ENCODE measurements at regions of chr11 and their contacts with region 1.

Region 1: GRCh38 chr11:63888170-63889086 is 28.5 kb downstream of the RCOR2 start:
- DNase-seq: peak; percentile 83
- ATAC-seq: peak; percentile 89
- H3K4me3 ChIP-seq: peak overlapping the region; percentile 36 to 88 (median 68)
- H3K4me3 Mint-ChIP-seq: peak overlapping the region; percentile 93
- H3K27ac ChIP-seq: peak overlapping the region; percentile 67 to 82
- H3K27ac Mint-ChIP-seq: peak overlapping the region; percentile 87
- H3K4me1 ChIP-seq: peaks cover 39 to 53% of the 10 kb centered on the region in 2 donors
- H3K4me1 Mint-ChIP-seq: peaks cover 72% of the 10 kb centered on the region
- H3K27me3 ChIP-seq: no peaks in the 10 kb centered on the region
- H3K27me3 Mint-ChIP-seq: no peaks in the 10 kb centered on the region
- CTCF ChIP-seq: no peak

Region 2: GRCh38 chr11:63877658-63878241 is 10.7 kb before region 1 on chr11:
- CTCF ChIA-PET with region 1: interaction called, 5 read pairs
- POLR2A ChIA-PET with region 1: interaction called, 10 read pairs
- intact Hi-C with region 1: no loop called
- DNase-seq: no peak
- ATAC-seq: no peak
- H3K4me3 ChIP-seq: no peak overlapping the region
- H3K4me3 Mint-ChIP-seq: no peak overlapping the region
- H3K27ac ChIP-seq: no peak overlapping the region
- H3K27ac Mint-ChIP-seq: no peak overlapping the region
- H3K4me1 ChIP-seq: peaks cover 3 to 11% of the 10 kb centered on the region in 2 donors
- H3K4me1 Mint-ChIP-seq: peaks cover 48% of the 10 kb centered on the region
- H3K27me3 ChIP-seq: no peaks in the 10 kb centered on the region
- H3K27me3 Mint-ChIP-seq: no peaks in the 10 kb centered on the region
- CTCF ChIP-seq: no peak

Region 3: GRCh38 chr11:63974259-63975143 is 86.1 kb after region 1 on chr11 and contains the start of gene COX8A:
- CTCF ChIA-PET with region 1: no interaction called
- POLR2A ChIA-PET with region 1: no interaction called
- intact Hi-C with region 1: loop called (anchors 10 kb)
- DNase-seq: peak; percentile 98
- ATAC-seq: peak; percentile 98
- H3K4me3 ChIP-seq: peak within 1 kb of the TSS; percentile 81 to 99 (median 94)
- H3K4me3 Mint-ChIP-seq: peak within 1 kb of the TSS; percentile 99
- H3K27ac ChIP-seq: peak within 1 kb of the TSS; percentile 83 to 94
- H3K27ac Mint-ChIP-seq: peak within 1 kb of the TSS; percentile 98
- H3K4me1 ChIP-seq: peaks cover 6 to 21% of the 10 kb centered on the region in 2 donors
- H3K4me1 Mint-ChIP-seq: peaks cover 29% of the 10 kb centered on the region
- H3K27me3 ChIP-seq: no peaks in the 10 kb centered on the region
- H3K27me3 Mint-ChIP-seq: peaks cover 3% of the 10 kb centered on the region
- CTCF ChIP-seq: no peak
- total RNA-seq, gene COX8A: 92.6 and 99.0 TPM in 2 replicates

Measured in B cell (primary cell).